SK-N-SH (cell line): ENCODE measurements at regions of chr17 and their contacts with region 1.

Region 1: GRCh38 chr17:51650202-51650601 is 389.9 kb downstream of the UTP18 start:
- DNase-seq: no peak
- H3K4me3 ChIP-seq: no peak overlapping the region
- H3K27ac ChIP-seq: no peak overlapping the region
- H3K4me1 ChIP-seq: peaks cover 0 to 8% of the 10 kb centered on the region in 2 experiments; a peak in 2 of 4 replicates
- H3K27me3 ChIP-seq: no peaks in the 10 kb centered on the region
- CTCF ChIP-seq: no peak
- EP300 ChIP-seq: no peak
- RAD21 ChIP-seq: no peak

Region 2: GRCh38 chr17:51640108-51640622 is 10.0 kb before region 1 on chr17:
- CTCF ChIA-PET with region 1: interaction called, 12 read pairs
- POLR2A ChIA-PET with region 1: interaction called, 3 read pairs
- DNase-seq: peak; percentile 27
- H3K4me3 ChIP-seq: no peak overlapping the region
- H3K27ac ChIP-seq: no peak overlapping the region
- H3K4me1 ChIP-seq: no peaks in the 10 kb centered on the region
- H3K27me3 ChIP-seq: no peaks in the 10 kb centered on the region
- CTCF ChIP-seq: no peak
- EP300 ChIP-seq: no peak
- RAD21 ChIP-seq: peak; percentile 61